ENCODE measurements at regions of chr2 and their contacts with region 1.

Region 1: DNA sequence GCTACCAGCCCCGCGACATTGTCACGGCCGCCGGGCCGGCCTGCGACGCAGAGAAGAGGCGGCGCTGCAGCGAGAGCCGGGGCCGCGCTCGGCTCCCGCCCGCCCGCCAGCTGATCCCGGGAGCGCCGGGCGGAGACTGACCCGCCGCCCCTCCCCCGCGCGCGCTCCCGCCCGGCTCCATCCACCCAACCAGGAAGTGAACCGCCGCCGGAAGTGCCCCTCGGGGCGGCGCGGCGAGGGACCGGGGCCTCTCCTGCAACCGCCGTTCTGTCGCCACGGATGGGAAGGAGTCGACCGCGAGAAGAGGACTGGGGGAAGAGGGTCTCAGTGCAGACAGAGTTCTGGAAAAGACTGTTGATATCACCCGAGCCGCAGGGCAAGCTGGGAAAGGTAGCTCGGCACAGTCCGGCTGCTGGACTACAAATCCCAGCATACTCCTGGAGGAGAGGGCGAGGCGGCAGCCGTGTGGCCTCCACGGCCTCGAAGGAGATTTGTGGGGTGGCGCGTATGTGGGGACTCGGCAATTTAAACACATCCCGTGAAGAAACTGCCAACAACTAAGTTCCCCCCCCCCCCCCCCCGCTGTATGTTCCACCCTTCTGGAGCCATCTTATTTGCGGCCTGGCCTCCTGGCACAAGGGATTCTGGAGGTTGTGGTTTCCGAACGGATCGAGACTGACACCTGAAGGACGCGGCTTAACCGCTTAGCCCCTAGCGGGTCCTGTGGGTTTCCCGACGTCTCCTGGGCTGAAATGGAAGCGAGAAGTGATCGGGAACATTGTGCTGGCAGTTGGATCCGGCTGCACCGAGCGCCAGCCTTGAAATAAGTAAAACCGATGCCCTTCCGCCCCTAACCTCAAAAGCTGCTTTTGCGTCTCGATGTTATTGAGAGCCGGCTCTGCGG is at the start of gene AAK1:
- DNase-seq: peak; percentile 69 to 89 (median 85)
- ATAC-seq: peak; percentile 71
- H3K4me3 ChIP-seq: peak within 1 kb of the TSS; percentile 80
- H3K4me3 Mint-ChIP-seq: peak within 1 kb of the TSS; percentile 95 to 99 (median 98)
- H3K27ac ChIP-seq: peak within 1 kb of the TSS; percentile 86
- H3K27ac Mint-ChIP-seq: peak within 1 kb of the TSS; percentile 94 to 99 (median 96)
- H3K4me1 ChIP-seq: peaks cover 43 to 50% of the 10 kb centered on the region in 2 donors
- H3K4me1 Mint-ChIP-seq: peaks cover 51 to 69% (median 59%) of the 10 kb centered on the region in 7 donors
- H3K27me3 ChIP-seq: no peaks in the 10 kb centered on the region
- H3K27me3 Mint-ChIP-seq: no peaks in the 10 kb centered on the region
- total RNA-seq, gene AAK1: 114 to 253 (median 218) TPM

Region 2: GRCh38 chr2:69177785-69178636 is 465.8 kb before region 1 on chr2:
- CTCF ChIA-PET with region 1: no interaction called
- POLR2A ChIA-PET with region 1: no interaction called
- intact Hi-C with region 1: no loop called
- DNase-seq: peak in 1 of 9 donors; percentile 34
- ATAC-seq: peak; percentile 91
- H3K4me3 ChIP-seq: no peak overlapping the region
- H3K4me3 Mint-ChIP-seq: no peak overlapping the region
- H3K27ac ChIP-seq: no peak overlapping the region
- H3K27ac Mint-ChIP-seq: no peak overlapping the region
- H3K4me1 ChIP-seq: no peaks in the 10 kb centered on the region
- H3K4me1 Mint-ChIP-seq: peaks cover 3 to 7% (median 5%) of the 10 kb centered on the region in 7 donors
- H3K27me3 ChIP-seq: no peaks in the 10 kb centered on the region
- H3K27me3 Mint-ChIP-seq: peaks cover 11 to 35% (median 16%) of the 10 kb centered on the region in 5 donors

Region 3: GRCh38 chr2:69353360-69353759 is 290.5 kb before region 1 on chr2:
- CTCF ChIA-PET with region 1: no interaction called
- POLR2A ChIA-PET with region 1: no interaction called
- intact Hi-C with region 1: no loop called
- DNase-seq: no peak
- ATAC-seq: no peak
- H3K4me3 ChIP-seq: no peak overlapping the region
- H3K4me3 Mint-ChIP-seq: no peak overlapping the region
- H3K27ac ChIP-seq: no peak overlapping the region
- H3K27ac Mint-ChIP-seq: peak overlapping the region in 1 of 9 donors; percentile 70
- H3K4me1 ChIP-seq: no peaks in the 10 kb centered on the region
- H3K4me1 Mint-ChIP-seq: no peaks in the 10 kb centered on the region
- H3K27me3 ChIP-seq: no peaks in the 10 kb centered on the region
- H3K27me3 Mint-ChIP-seq: no peaks in the 10 kb centered on the region

Region 4: GRCh38 chr2:69436938-69437750 is 206.7 kb before region 1 on chr2 and contains the start of gene NFU1:
- CTCF ChIA-PET with region 1: no interaction called
- POLR2A ChIA-PET with region 1: interaction called, 14 read pairs
- intact Hi-C with region 1: loop called (anchors 1 to 2 kb)
- DNase-seq: peak; percentile 76 to 89 (median 85)
- ATAC-seq: peak; percentile 91
- H3K4me3 ChIP-seq: peak within 1 kb of the TSS; percentile 68
- H3K4me3 Mint-ChIP-seq: peak within 1 kb of the TSS; percentile 92 to 100 (median 94)
- H3K27ac ChIP-seq: peak within 1 kb of the TSS; percentile 98
- H3K27ac Mint-ChIP-seq: peak within 1 kb of the TSS; percentile 97 to 100 (median 99)
- H3K4me1 ChIP-seq: peaks cover 18 to 21% of the 10 kb centered on the region in 2 donors
- H3K4me1 Mint-ChIP-seq: peaks cover 14 to 48% (median 40%) of the 10 kb centered on the region in 7 donors
- H3K27me3 ChIP-seq: no peaks in the 10 kb centered on the region
- H3K27me3 Mint-ChIP-seq: no peaks in the 10 kb centered on the region
- total RNA-seq, gene NFU1: 16.1 to 25.8 (median 22.6) TPM

Region 5: DNA sequence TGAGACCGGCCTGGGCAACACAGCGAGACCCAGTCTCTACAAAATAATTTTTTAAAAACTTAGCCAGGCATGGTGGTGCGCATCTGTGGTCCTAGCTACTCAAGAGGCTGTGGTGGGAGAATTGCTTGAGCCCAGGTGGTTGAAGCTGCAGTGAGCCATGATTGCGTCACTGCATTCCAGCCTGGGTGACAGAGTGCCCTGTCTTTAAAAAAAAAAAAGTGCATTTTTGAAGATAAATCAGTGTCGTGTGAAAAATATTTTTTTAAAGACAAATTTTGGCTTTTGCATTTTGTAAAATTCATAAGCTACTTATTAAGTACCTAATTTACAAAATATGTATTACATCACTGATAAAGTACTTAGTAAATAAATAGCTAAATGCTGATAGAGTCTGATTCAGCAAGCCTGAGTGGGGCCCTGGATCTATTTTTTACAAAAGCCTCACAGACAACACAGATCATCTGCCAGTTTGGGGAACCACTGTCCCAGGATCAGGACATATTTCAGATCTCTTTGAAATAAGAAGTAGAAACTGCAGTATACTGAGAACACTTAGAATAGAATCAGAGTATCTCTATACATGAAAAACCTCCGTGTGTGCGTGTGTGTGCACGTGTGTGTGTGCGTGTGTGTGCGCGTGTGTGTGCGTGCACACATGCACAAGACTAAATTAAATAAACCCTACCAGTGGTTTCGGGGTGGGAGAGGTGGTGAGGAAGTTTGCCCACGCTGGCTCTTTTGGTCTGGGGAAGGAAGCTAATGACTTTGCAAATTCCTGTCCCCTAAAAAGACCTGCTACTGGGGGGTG is 61.9 kb before region 1 on chr2:
- CTCF ChIA-PET with region 1: no interaction called
- POLR2A ChIA-PET with region 1: interaction called, 21 read pairs
- intact Hi-C with region 1: no loop called
- DNase-seq: peak in 4 of 9 donors; percentile 15 to 27 (median 24)
- ATAC-seq: peak; percentile 41
- H3K4me3 ChIP-seq: no peak overlapping the region
- H3K4me3 Mint-ChIP-seq: peak overlapping the region; percentile 26 to 82 (median 75)
- H3K27ac ChIP-seq: peak overlapping the region; percentile 34
- H3K27ac Mint-ChIP-seq: peak overlapping the region in 8 of 9 donors; percentile 30 to 94 (median 87)
- H3K4me1 ChIP-seq: peaks cover 42 to 87% of the 10 kb centered on the region in 2 donors
- H3K4me1 Mint-ChIP-seq: peaks cover 73 to 98% (median 96%) of the 10 kb centered on the region in 7 donors
- H3K27me3 ChIP-seq: no peaks in the 10 kb centered on the region
- H3K27me3 Mint-ChIP-seq: no peaks in the 10 kb centered on the region

Region 6: DNA sequence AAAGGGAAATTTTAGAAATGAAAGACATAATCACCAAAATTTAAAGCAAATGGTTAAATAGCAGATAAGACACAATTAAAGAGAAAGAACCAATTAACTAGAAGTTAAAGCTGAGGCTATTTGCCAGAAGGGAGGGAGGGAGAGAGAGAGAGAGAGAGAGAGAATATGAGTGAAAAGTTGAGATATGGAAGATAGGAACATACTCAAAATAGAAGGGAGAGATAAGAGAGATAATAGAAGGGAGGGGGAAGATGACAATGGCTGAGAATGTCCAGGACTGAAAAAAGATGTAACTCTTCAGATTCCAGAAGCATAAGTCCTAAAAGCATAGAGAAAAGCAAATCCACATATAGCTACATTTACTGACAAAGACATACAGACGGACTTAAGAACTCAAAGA is 16.8 kb after region 1 on chr2:
- CTCF ChIA-PET with region 1: interaction called, 5 read pairs
- POLR2A ChIA-PET with region 1: interaction called, 39 read pairs
- intact Hi-C with region 1: no loop called
- DNase-seq: no peak
- ATAC-seq: no peak
- H3K4me3 ChIP-seq: no peak overlapping the region
- H3K4me3 Mint-ChIP-seq: peak overlapping the region in 4 of 10 donors; percentile 15 to 40 (median 28)
- H3K27ac ChIP-seq: no peak overlapping the region
- H3K27ac Mint-ChIP-seq: peak overlapping the region in 6 of 9 donors; percentile 1 to 55 (median 19)
- H3K4me1 ChIP-seq: peaks cover 0 to 4% of the 10 kb centered on the region in 2 donors
- H3K4me1 Mint-ChIP-seq: peaks cover 5 to 35% (median 22%) of the 10 kb centered on the region in 7 donors
- H3K27me3 ChIP-seq: no peaks in the 10 kb centered on the region
- H3K27me3 Mint-ChIP-seq: no peaks in the 10 kb centered on the region

Region 7: DNA sequence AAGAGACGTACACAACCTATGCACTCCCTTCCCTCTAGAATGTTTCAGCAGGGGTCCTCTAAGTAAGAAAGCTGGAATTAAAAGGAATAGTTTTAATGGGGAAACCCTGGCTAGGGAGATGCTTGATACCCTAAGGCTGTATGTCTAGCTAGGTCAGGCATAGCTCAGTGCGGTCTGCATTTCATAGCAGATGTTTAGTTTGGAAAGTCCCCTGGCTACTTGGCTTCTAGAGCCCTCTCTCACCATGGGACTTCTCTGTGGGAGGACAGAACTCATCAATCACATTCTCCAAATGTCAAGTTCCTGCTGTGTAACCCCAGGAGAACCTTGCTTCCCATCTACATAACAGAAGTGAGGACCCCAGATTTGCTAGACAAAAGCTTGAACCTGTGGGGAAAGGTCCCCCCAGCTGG is 74.0 kb after region 1 on chr2:
- CTCF ChIA-PET with region 1: interaction called, 33 read pairs
- POLR2A ChIA-PET with region 1: interaction called, 73 read pairs
- intact Hi-C with region 1: loop called (anchors 1 kb)
- DNase-seq: no peak
- ATAC-seq: no peak
- H3K4me3 ChIP-seq: no peak overlapping the region
- H3K4me3 Mint-ChIP-seq: no peak overlapping the region
- H3K27ac ChIP-seq: no peak overlapping the region
- H3K27ac Mint-ChIP-seq: peak overlapping the region in 1 of 9 donors; percentile 42
- H3K4me1 ChIP-seq: peaks cover 4 to 5% of the 10 kb centered on the region in 2 donors
- H3K4me1 Mint-ChIP-seq: peaks cover 6 to 24% (median 17%) of the 10 kb centered on the region in 7 donors
- H3K27me3 ChIP-seq: no peaks in the 10 kb centered on the region
- H3K27me3 Mint-ChIP-seq: peaks cover 0 to 3% (median 0%) of the 10 kb centered on the region in 5 donors

Region 8: GRCh38 chr2:70086838-70087701 is 443.2 kb after region 1 on chr2 and contains the start of gene PCBP1:
- CTCF ChIA-PET with region 1: no interaction called
- POLR2A ChIA-PET with region 1: interaction called, 3 read pairs
- intact Hi-C with region 1: loop called (anchors 5 to 10 kb)
- DNase-seq: peak; percentile 94 to 100 (median 98)
- ATAC-seq: peak; percentile 83
- H3K4me3 ChIP-seq: peak within 1 kb of the TSS; percentile 86
- H3K4me3 Mint-ChIP-seq: peak within 1 kb of the TSS; percentile 91 to 98 (median 97)
- H3K27ac ChIP-seq: peak within 1 kb of the TSS; percentile 100
- H3K27ac Mint-ChIP-seq: peak within 1 kb of the TSS; percentile 99 to 100 (median 100)
- H3K4me1 ChIP-seq: peaks cover 55 to 59% of the 10 kb centered on the region in 2 donors
- H3K4me1 Mint-ChIP-seq: peaks cover 40 to 67% (median 59%) of the 10 kb centered on the region in 7 donors
- H3K27me3 ChIP-seq: no peaks in the 10 kb centered on the region
- H3K27me3 Mint-ChIP-seq: peaks cover 0 to 4% (median 0%) of the 10 kb centered on the region in 5 donors
- total RNA-seq, gene PCBP1: 257 to 487 (median 368) TPM